ENCODE measurements at regions of chr3 and their contacts with region 1.

Region 1: DNA sequence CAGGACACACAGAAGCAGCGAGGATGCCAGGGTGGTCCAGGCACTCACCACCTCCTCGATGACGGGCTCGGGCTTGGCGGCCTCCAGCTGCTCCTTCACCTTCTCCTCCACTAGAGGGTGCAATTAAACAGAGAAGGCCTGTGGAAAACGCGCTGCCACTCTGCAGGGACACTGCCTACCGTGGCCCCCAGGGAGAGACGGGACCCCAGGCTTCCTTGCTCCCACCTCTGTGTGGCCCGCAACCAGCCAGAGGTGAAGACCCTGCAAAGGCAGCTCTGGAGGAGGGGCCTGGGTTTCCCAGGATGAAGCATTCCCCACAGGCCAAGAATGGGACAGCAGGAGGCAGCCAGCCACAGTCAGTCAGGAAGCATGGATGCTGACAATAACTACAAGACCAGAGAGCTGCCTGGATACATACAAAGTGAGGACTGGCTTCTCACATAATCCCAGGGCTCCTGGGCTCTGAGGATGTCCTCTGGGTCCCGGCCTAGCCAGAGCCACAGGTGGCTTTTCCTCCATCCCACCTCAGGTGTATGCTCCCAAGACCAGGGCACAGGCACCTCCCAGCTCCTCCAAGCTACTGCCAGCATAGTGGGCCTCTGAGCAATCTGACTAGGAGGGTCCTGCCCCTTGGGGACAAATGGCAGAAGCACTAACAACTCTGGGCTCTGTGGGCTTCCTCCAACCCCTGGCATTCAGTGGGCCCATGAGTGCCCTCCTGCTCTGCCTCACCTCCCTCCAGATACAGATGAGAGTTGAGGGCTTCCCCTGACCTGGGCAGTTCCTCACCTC is 46.2 kb downstream of the PTH1R start:
- DNase-seq: peak in 4 of 6 donors; percentile 52 to 77 (median 64)
- ATAC-seq: peak; percentile 56 to 79 (median 74)
- H3K4me3 ChIP-seq: no peak overlapping the region
- H3K27ac ChIP-seq: no peak overlapping the region
- H3K4me1 ChIP-seq: peaks cover 1 to 9% (median 3%) of the 10 kb centered on the region in 3 donors
- H3K27me3 ChIP-seq: no peaks in the 10 kb centered on the region
- CTCF ChIP-seq: peak; percentile 56 to 68 (median 60)

Region 2: DNA sequence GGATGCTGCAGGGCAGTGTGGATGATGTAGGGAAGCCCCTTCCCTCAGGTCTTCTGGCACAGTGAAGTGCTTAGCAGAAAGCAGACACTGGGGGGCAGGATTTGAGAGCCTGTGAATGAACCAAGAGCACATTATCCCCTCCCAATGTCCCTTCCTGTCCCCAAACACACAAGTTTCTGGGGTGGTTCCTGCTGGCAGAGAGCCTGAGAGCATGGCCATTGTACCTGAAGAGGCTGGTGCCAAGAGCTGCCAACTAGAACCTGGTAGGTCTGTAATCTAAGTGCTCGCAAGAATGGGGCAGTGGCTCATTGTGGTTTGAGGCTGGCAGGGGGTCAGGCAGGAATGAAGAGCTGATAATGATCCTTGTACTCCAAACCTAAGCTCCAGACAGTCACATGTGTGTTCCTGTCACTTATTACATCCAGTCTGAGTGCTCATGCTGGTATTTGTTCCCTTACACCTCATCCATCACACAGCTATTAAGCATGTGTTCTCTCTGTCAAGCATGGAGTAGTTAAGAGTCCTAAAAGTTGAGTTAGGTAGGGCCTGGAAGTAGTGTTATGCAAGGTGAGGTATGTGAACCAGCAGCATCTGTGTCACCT is 708.9 kb before region 1 on chr3:
- intact Hi-C with region 1: no loop called
- DNase-seq: no peak
- ATAC-seq: peak in 1 of 4 donors; percentile 40
- H3K4me3 ChIP-seq: no peak overlapping the region
- H3K27ac ChIP-seq: no peak overlapping the region
- H3K4me1 ChIP-seq: peaks cover 0 to 6% (median 5%) of the 10 kb centered on the region in 3 donors
- H3K27me3 ChIP-seq: no peaks in the 10 kb centered on the region
- CTCF ChIP-seq: no peak

Region 3: DNA sequence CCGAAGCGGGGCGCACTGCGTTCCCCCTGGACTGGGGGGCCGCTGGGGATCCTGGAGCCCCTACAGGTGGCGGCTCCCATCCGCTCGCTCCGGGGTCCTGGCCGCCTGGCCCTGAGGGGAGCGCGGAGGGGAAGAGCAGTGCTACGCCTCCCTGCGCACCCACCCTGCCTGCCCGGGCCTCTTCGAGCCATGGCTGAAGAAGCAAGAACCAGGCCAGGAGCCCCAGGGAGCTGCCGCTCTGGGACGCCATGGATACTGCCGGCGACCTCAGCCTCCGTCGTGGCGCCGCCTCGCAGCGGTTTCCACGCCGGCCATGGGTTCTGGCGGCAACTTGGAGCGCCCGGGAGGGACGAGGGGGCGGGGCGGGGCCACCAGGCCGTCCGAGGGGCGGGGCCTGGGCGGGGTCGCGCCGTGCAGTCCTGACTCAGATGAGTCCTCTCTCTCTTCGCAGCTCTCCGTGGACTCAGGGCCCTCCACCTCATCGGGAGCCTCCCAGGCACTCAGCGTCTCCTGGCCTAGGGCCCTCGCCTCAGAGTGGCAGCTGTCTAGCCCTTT is 111.4 kb before region 1 on chr3:
- intact Hi-C with region 1: no loop called
- DNase-seq: peak; percentile 77 to 91 (median 86)
- ATAC-seq: peak; percentile 97 to 99 (median 97)
- H3K4me3 ChIP-seq: peak overlapping the region; percentile 24 to 72 (median 50)
- H3K27ac ChIP-seq: peak overlapping the region; percentile 46 to 66 (median 63)
- H3K4me1 ChIP-seq: no peaks in the 10 kb centered on the region
- H3K27me3 ChIP-seq: no peaks in the 10 kb centered on the region
- CTCF ChIP-seq: no peak

Region 4: GRCh38 chr3:46998121-46998851 is 74.5 kb after region 1 on chr3:
- intact Hi-C with region 1: loop called in 2 of 3 experiments (anchors 5 kb)
- DNase-seq: peak; percentile 76 to 95 (median 87)
- ATAC-seq: peak; percentile 86 to 93 (median 90)
- H3K4me3 ChIP-seq: no peak overlapping the region
- H3K27ac ChIP-seq: no peak overlapping the region
- H3K4me1 ChIP-seq: no peaks in the 10 kb centered on the region
- H3K27me3 ChIP-seq: no peaks in the 10 kb centered on the region
- CTCF ChIP-seq: peak; percentile 66 to 82 (median 78)

Region 5: GRCh38 chr3:47324278-47324865 is 400.6 kb after region 1 on chr3:
- intact Hi-C with region 1: loop called in 1 of 3 experiments (anchors 10 kb)
- DNase-seq: peak in 3 of 6 donors; percentile 22 to 67 (median 32)
- ATAC-seq: peak; percentile 90 to 99 (median 96)
- H3K4me3 ChIP-seq: no peak overlapping the region
- H3K27ac ChIP-seq: no peak overlapping the region
- H3K4me1 ChIP-seq: no peaks in the 10 kb centered on the region
- H3K27me3 ChIP-seq: no peaks in the 10 kb centered on the region
- CTCF ChIP-seq: peak; percentile 32 to 54 (median 46)

Measured in pancreas (tissue), 10 donors.